ENCODE measurements at regions of chr5 and their contacts with region 1.

Region 1: DNA sequence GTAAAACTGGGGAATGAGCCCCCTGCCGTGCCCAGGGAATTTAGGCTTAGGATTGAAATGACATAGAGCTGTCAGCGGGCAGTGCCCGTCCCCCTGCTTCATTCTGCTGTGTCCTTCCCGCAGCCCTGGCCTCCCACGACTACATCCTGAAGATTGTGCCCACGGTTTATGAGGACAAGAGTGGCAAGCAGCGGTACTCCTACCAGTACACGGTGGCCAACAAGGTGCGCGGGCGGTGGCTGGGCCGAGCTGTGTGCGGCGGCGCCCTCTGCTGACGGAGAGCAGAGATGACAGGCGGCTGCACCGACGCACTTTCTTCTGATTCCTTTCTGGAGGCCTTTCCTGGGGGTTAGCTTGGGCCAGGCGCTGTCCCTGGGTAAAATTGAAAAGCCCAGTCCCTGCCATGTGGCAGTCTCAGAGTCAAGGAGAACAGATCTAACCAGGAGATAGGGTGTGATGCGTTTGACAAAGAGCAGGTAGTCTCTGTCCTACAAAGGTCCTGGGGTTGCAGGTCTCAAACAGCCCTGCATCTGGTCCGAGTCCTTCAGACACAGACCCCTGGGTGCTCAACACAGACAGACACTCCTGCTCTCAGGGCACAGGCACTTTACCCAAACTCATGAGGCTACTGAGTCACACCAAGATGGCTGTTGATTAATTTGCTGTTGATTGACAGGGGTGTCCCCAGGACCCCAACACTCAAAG is 26.8 kb upstream of the RPL26L1 start:
- DNase-seq: peak; percentile 91

Region 2: GRCh38 chr5:172479044-172479783 is 453.3 kb before region 1 on chr5:
- intact Hi-C with region 1: loop called (anchors 5 kb)
- DNase-seq: peak; percentile 86